H1 (cell line): ENCODE measurements at regions of chr9 and their contacts with region 1.

Region 1: GRCh38 chr9:96245399-96245798 is 56.6 kb downstream of the HSD17B3 start:
- DNase-seq: peak in 1 of 2 experiments; percentile 79
- H3K4me3 ChIP-seq: no peak overlapping the region
- H3K27ac ChIP-seq: no peak overlapping the region
- H3K4me1 ChIP-seq: no peaks in the 10 kb centered on the region
- H3K27me3 ChIP-seq: no peaks in the 10 kb centered on the region
- CTCF ChIP-seq: peak; percentile 71 to 77 (median 74)
- EP300 ChIP-seq: no peak
- POLR2A ChIP-seq: no peak
- RAD21 ChIP-seq: peak; percentile 53 to 66

Region 2: DNA sequence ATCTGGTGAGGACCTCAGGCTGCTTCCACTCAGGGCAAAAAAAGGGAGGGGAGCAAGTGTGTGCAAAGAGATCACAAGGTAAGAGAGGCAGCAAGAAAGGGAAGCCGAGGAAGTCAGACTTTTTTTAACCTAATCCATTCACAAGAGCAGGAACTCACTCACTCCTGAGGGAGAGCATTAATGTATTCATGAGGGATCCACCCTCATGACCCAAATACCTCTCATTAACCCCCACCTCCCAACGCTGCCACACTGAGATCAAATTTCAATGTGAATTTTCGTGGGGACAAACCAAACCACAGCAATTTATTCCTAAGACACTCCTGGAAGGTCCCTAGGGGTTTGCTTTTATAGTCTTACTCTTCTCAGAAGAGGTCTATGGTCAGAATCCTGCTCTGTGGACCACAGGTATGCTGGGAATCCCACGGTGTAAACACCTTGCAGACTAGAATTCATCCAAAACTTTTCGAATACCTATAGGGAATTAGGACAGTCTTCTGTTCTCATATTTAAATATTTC is 52.1 kb before region 1 on chr9:
- CTCF ChIA-PET with region 1: no interaction called
- POLR2A ChIA-PET with region 1: no interaction called
- DNase-seq: no peak
- H3K4me3 ChIP-seq: no peak overlapping the region
- H3K27ac ChIP-seq: no peak overlapping the region
- H3K4me1 ChIP-seq: peaks cover 0 to 2% (median 0%) of the 10 kb centered on the region in 4 experiments; a peak in 3 of 7 replicates
- H3K27me3 ChIP-seq: no peaks in the 10 kb centered on the region; a peak in 1 of 7 replicates
- CTCF ChIP-seq: no peak
- EP300 ChIP-seq: no peak
- POLR2A ChIP-seq: no peak
- RAD21 ChIP-seq: no peak

Region 3: GRCh38 chr9:96232539-96233241 is 12.7 kb before region 1 on chr9:
- CTCF ChIA-PET with region 1: interaction called, 82 read pairs
- POLR2A ChIA-PET with region 1: no interaction called
- DNase-seq: no peak
- H3K4me3 ChIP-seq: no peak overlapping the region
- H3K27ac ChIP-seq: no peak overlapping the region
- H3K4me1 ChIP-seq: no peaks in the 10 kb centered on the region
- H3K27me3 ChIP-seq: no peaks in the 10 kb centered on the region
- CTCF ChIP-seq: peak; percentile 48 to 81 (median 78)
- EP300 ChIP-seq: no peak
- POLR2A ChIP-seq: no peak
- RAD21 ChIP-seq: peak; percentile 71 to 79

Region 4: DNA sequence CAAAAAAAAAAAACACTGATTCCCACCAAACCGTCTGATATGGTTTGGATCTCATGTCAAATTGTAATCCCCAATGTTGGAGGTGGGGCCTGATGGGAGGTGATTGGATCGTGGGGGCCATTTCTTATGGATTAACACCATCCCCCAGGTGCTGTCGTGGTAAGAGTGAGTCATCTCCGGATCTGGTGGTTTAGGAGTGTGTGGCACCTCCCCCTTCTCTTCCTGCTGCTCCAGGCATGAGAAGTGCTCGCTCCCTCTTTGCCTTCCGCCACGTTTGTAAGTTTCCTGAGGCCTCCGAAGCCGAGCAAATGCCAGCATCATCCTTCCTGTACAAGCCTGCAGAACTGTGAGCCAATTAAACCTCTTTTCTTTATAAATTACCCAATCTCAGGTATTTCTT is 11.4 kb after region 1 on chr9:
- CTCF ChIA-PET with region 1: interaction called, 13 read pairs
- POLR2A ChIA-PET with region 1: interaction called, 3 read pairs
- DNase-seq: no peak
- H3K4me3 ChIP-seq: peak overlapping the region in 1 of 4 experiments; percentile 20; a peak in 1 of 8 replicates
- H3K27ac ChIP-seq: no peak overlapping the region
- H3K4me1 ChIP-seq: peaks cover 2 to 10% (median 5%) of the 10 kb centered on the region in 4 experiments
- H3K27me3 ChIP-seq: no peaks in the 10 kb centered on the region
- CTCF ChIP-seq: no peak
- EP300 ChIP-seq: 0 out of 3 replicates have a peak, but pooled peaks of 1 of the 2 experiments have one; percentile 17
- POLR2A ChIP-seq: no peak
- RAD21 ChIP-seq: no peak

Region 5: GRCh38 chr9:96270236-96270744 is 24.9 kb after region 1 on chr9:
- CTCF ChIA-PET with region 1: interaction called, 13 read pairs
- POLR2A ChIA-PET with region 1: no interaction called
- DNase-seq: no peak
- H3K4me3 ChIP-seq: no peak overlapping the region
- H3K27ac ChIP-seq: no peak overlapping the region
- H3K4me1 ChIP-seq: peaks cover 0 to 5% (median 0%) of the 10 kb centered on the region in 4 experiments; a peak in 1 of 7 replicates
- H3K27me3 ChIP-seq: no peaks in the 10 kb centered on the region
- CTCF ChIP-seq: no peak
- EP300 ChIP-seq: no peak
- POLR2A ChIP-seq: no peak
- RAD21 ChIP-seq: no peak

Region 6: DNA sequence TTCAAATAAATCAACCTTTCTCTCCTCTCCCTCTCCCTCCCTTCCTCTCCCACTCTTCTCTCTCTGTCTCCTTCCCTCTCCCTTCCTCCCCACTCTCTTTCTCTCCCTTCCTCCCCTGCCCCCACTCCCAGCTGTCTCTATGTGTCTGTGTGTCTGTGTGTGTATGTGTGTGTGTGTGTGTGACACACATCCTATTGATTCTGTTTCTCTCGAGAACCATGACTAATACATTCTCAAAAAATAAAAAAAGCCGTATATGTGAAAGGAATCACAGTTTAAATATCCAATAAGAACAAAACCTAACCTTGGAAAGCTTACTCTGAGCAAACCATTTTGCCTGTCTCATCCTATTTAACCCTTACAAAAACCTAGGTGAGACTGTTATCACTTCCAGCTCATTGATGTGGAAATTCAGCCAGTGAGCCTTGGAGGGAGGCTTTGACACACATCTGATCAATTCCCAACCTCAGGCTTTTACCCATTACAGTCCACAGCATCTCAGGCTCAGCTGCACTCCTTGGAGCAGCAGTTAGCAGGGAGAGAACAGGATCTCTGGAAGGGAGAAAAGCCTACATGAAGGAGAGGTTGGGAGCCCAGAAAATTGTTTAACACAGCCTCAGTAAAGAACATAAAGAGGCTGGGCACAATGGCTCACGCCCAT is 48.2 kb after region 1 on chr9:
- CTCF ChIA-PET with region 1: interaction called, 11 read pairs
- POLR2A ChIA-PET with region 1: interaction called, 3 read pairs
- DNase-seq: no peak
- H3K4me3 ChIP-seq: no peak overlapping the region
- H3K27ac ChIP-seq: no peak overlapping the region
- H3K4me1 ChIP-seq: peaks cover 0 to 5% (median 0%) of the 10 kb centered on the region in 4 experiments; a peak in 2 of 7 replicates
- H3K27me3 ChIP-seq: no peaks in the 10 kb centered on the region
- CTCF ChIP-seq: no peak
- EP300 ChIP-seq: no peak
- POLR2A ChIP-seq: no peak
- RAD21 ChIP-seq: no peak

Region 7: GRCh38 chr9:96317335-96317980 is 72.1 kb after region 1 on chr9:
- CTCF ChIA-PET with region 1: interaction called, 37 read pairs
- POLR2A ChIA-PET with region 1: no interaction called
- DNase-seq: peak in 1 of 2 experiments; percentile 66
- H3K4me3 ChIP-seq: no peak overlapping the region
- H3K27ac ChIP-seq: no peak overlapping the region
- H3K4me1 ChIP-seq: peaks cover 0 to 10% (median 6%) of the 10 kb centered on the region in 4 experiments; a peak in 4 of 7 replicates
- H3K27me3 ChIP-seq: no peaks in the 10 kb centered on the region
- CTCF ChIP-seq: peak; percentile 58 to 90 (median 69)
- EP300 ChIP-seq: no peak
- POLR2A ChIP-seq: no peak
- RAD21 ChIP-seq: peak; percentile 93

Region 8: DNA sequence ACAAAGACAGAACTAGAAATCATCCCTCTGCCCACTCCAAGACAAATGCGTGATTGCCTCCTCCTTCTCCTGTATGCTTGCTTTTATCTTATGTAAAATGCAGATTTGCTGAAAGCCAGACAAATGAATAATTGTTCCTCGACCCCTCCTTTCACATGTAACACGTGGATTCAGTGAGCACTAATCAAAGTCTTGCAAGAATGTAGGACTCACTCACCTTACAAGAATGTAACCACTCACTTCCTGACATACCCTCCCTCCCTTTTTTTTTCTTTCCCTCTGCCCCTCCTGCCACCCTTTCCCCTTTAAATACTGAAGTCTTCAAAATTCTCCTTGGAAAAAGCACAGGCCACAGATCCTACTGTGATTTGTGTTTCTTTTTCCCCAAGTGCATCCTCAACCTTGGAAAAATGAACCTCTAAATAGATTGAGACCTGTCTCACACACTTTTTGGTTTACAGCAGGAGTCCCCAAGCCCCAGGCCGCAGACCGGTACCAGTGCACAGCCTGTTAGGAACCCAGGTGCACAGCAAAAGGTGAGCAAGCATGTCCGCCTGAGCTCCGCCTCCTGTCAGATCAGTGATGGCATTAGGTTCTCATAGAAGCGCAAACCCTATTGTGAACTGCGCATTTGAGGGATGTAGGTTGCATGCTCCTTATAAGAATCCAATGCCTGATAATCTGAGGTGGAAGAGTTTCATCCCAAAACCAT is 86.0 kb after region 1 on chr9:
- CTCF ChIA-PET with region 1: no interaction called
- POLR2A ChIA-PET with region 1: no interaction called
- DNase-seq: no peak
- H3K4me3 ChIP-seq: no peak overlapping the region
- H3K27ac ChIP-seq: no peak overlapping the region
- H3K4me1 ChIP-seq: peaks cover 0 to 5% (median under 1%) of the 10 kb centered on the region in 4 experiments; a peak in 2 of 7 replicates
- H3K27me3 ChIP-seq: no peaks in the 10 kb centered on the region
- CTCF ChIP-seq: no peak
- EP300 ChIP-seq: no peak
- POLR2A ChIP-seq: no peak
- RAD21 ChIP-seq: no peak

Region 9: DNA sequence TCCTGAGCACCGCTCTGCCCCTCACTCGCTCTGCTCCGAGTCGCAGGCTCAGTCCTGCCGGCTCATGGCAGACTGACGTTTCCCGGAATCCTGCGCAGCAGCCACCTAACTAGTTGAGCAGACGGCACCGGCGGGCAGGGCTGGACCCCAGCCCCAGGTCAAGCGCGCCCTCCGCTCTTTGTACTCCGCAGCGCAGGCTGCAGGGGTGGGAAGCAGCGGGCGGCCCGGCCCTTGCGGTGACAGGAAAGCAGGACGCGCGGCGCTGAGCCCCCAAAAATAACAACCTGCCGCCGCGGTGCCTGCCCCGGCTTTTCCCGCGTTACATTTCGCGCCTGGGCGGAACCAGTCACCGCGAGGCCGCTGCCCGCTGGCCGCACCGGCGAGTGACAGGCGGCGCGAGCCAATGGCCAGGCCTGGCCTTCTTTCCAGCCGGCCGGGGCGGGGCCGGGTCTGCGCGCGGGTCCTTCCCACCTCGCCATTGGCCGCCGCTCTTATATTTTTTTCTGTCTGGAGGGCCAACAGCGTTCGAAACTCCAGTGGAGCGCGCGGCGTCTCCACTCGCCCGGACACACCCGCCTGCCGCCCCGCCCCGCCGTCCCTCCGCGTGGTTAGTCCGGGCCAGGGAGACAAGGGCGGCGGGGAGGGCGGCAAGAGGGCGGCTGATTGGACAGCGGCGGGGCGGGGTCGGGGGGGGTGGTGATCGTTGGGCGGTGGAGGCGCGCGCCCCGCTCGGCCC is 172.8 kb after region 1 on chr9 and contains the start of gene ZNF367:
- CTCF ChIA-PET with region 1: no interaction called
- POLR2A ChIA-PET with region 1: no interaction called
- DNase-seq: peak in 1 of 2 experiments; percentile 66
- H3K4me3 ChIP-seq: peak within 1 kb of the TSS; percentile 82 to 98 (median 92)
- H3K27ac ChIP-seq: peak within 1 kb of the TSS; percentile 88
- H3K4me1 ChIP-seq: peaks cover 0 to 14% (median 7%) of the 10 kb centered on the region in 4 experiments
- H3K27me3 ChIP-seq: no peaks in the 10 kb centered on the region
- CTCF ChIP-seq: no peak
- EP300 ChIP-seq: no peak
- POLR2A ChIP-seq: peak; percentile 64 to 81
- RAD21 ChIP-seq: no peak
- total RNA-seq, gene ZNF367: 6.7 and 8.2 TPM in 2 replicates

Region 10: GRCh38 chr9:96875461-96876364 is 630.3 kb after region 1 on chr9:
- CTCF ChIA-PET with region 1: no interaction called
- POLR2A ChIA-PET with region 1: no interaction called
- DNase-seq: peak; percentile 91 to 93
- H3K4me3 ChIP-seq: peak overlapping the region; percentile 46 to 68 (median 65)
- H3K27ac ChIP-seq: no peak overlapping the region
- H3K4me1 ChIP-seq: peaks cover 0 to 6% (median 1%) of the 10 kb centered on the region in 4 experiments; a peak in 2 of 7 replicates
- H3K27me3 ChIP-seq: 0 out of 7 replicates have a peak, but pooled peaks cover 0 to 8% (median 2%) of the 10 kb centered on the region in 4 experiments
- CTCF ChIP-seq: peak; percentile 70 to 83 (median 74)
- EP300 ChIP-seq: no peak
- POLR2A ChIP-seq: no peak; a peak in 1 of 3 replicates
- RAD21 ChIP-seq: peak; percentile 43 to 58